ENCODE measurements at regions of chr12 and their contacts with region 1.

Region 1: GRCh38 chr12:113366827-113367226 is 8.4 kb downstream of the PLBD2 start:
- DNase-seq: no peak
- H3K4me3 ChIP-seq: no peak overlapping the region
- H3K27ac ChIP-seq: no peak overlapping the region
- H3K4me1 ChIP-seq: no peaks in the 10 kb centered on the region
- H3K27me3 ChIP-seq: no peaks in the 10 kb centered on the region
- CTCF ChIP-seq: no peak

Region 2: DNA sequence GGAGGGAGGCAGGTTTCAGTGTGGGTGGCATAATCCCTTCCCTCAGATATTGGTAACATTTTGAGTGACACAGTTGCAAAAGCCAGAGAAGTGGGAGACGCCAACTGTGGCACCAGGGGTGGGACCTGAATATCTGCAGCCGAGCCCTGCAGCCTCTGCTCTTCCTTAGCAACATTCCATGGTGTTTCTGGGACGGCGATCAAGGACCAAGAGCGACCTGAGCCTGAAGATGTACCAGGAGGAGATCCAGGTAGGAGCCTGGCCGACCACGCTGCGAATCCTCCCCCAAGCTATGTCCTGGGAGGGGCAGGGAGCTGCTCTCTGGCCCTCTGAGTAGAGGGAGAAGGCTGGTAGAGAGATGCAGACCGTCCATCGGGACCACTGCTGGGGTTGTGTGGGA is 73.7 kb before region 1 on chr12:
- CTCF ChIA-PET with region 1: no interaction called
- POLR2A ChIA-PET with region 1: interaction called, 12 read pairs
- intact Hi-C with region 1: no loop called
- DNase-seq: no peak
- H3K4me3 ChIP-seq: no peak overlapping the region
- H3K27ac ChIP-seq: no peak overlapping the region
- H3K4me1 ChIP-seq: no peaks in the 10 kb centered on the region
- H3K27me3 ChIP-seq: no peaks in the 10 kb centered on the region
- CTCF ChIP-seq: no peak